MCF 10A (cell line): ENCODE measurements at regions of chr12 and their contacts with region 1.

Region 1: DNA sequence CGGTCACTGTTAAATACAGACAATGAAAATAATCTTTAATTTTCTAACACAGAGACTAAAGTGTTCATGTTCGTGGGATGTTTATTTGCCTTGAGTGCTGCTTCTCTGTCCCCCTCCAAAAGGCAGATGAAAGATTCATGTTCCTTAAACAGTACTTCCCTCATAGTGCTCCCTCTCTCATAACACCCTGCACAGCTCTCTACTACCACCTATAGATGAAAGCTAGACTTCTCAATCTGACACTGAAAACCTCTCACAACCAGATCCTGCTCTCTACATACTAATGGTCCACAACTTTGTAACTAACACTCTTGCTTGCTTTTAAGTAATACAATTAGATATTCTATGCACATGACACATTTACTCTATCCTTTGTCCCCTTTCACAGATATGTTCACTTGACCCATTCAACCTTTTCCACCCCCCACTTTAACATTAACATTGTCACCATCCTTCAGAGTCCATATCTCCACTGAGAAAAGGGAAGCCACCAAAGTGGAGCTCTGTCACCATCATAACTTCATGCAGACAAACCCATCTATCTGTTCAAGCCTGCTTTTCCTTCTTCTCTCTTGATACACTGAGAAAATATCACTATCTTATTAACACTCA is 266.4 kb upstream of the USP15 start:
- DNase-seq: peak; percentile 67
- H3K4me3 Mint-ChIP-seq: no peak overlapping the region
- H3K27ac Mint-ChIP-seq: no peak overlapping the region
- H3K4me1 Mint-ChIP-seq: no peaks in the 10 kb centered on the region
- H3K27me3 Mint-ChIP-seq: no peaks in the 10 kb centered on the region
- CTCF ChIP-seq: peak; percentile 86

Region 2: DNA sequence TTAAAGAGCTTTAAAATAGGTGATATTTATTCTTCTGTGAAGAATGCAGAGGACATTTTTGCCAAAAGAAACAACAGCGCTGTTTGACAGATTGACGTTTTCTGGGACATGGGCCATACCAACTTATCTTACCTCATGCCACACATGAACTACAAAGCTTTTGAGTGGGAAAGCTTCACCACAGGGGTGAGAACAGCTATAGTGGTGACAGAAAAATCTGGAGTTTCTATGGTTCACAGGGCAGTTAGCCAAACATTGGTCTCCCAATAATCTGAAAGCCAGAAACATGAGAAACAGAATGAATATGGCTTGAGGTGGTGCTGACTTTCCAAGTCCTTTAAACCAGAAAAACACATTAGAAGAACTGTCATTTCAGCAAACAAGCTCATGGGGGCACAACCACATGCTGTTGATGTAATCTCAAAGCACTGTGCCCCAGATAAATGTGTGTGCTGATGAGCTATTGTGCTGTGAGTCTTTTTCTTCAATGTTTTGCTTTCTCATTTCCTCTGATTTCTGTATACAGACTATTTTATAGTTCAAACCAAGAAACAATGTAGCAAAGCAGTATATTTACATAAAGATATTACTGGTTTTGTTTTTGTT is 1492.6 kb before region 1 on chr12:
- CTCF ChIA-PET with region 1: no interaction called
- POLR2A ChIA-PET with region 1: no interaction called
- intact Hi-C with region 1: loop called (anchors 1 kb)
- DNase-seq: peak; percentile 41
- H3K4me3 Mint-ChIP-seq: no peak overlapping the region
- H3K27ac Mint-ChIP-seq: no peak overlapping the region
- H3K4me1 Mint-ChIP-seq: no peaks in the 10 kb centered on the region
- H3K27me3 Mint-ChIP-seq: no peaks in the 10 kb centered on the region
- CTCF ChIP-seq: peak; percentile 25

Region 3: DNA sequence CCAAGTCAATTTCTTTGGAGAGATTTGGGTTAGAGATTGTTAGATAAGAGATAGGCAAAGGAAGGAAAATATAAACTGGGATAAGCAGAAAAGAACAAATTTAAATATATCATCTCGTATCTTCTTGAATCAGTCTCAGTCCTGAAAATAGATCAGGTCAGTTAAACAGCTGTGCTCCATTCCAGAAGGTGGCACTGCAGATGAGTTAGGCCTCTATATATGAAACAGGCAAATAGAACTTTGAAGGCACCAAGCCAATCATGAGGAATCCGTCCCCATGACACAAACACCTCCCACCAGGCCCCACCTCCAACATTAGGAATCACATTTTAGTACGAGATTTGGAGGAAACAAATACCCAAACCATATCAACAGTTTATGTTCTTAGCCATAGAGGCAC is 339.1 kb before region 1 on chr12:
- CTCF ChIA-PET with region 1: interaction called, 7 read pairs
- POLR2A ChIA-PET with region 1: no interaction called
- intact Hi-C with region 1: loop called (anchors 1 kb)
- DNase-seq: peak; percentile 25
- H3K4me3 Mint-ChIP-seq: no peak overlapping the region
- H3K27ac Mint-ChIP-seq: no peak overlapping the region
- H3K4me1 Mint-ChIP-seq: no peaks in the 10 kb centered on the region
- H3K27me3 Mint-ChIP-seq: no peaks in the 10 kb centered on the region
- CTCF ChIP-seq: peak; percentile 21